ENCODE measurements at regions of chr14 and their contacts with region 1.

Region 1: DNA sequence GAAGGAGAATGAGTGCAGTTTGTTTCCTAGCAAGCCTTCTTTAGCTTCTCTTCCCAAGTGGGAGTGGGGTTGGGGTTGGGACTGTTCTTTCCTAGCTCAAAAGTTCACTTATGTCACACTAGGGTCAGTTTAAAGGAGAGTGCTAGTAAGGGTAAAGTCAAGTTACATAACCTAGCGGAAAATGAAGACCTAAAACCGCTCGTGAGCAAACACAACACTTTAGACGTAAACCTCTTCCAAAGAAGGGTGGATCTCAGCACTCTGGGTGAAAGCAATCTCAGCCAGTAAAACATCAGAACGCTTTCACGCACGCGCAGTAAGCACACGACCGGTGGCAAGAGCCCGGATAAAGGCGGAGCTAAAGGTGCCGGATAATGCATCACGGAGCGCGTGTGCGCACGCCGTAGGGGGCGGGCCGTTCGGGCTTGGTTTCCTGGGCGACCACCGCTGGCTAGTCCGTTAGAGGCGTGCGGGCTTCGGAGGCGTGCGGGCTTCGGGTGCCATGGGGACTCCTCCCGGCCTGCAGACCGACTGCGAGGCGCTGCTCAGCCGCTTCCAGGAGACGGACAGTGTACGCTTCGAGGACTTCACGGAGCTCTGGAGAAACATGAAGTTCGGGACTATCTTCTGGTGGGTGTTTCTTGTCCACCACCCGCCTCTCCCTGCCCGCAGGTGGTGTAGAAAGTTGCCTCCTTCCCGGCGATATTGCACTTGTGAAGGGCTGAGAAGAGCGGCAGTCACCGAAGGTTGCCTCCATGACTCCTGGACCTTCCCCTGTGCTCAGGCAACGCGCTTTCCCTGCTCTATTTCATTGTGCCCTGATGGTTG is at the start of gene SNAPC1:
- DNase-seq: peak; percentile 96
- ATAC-seq: peak; percentile 98
- H3K4me3 Mint-ChIP-seq: peak within 1 kb of the TSS; percentile 93
- H3K27ac Mint-ChIP-seq: peak within 1 kb of the TSS; percentile 98
- H3K4me1 Mint-ChIP-seq: peaks cover 38% of the 10 kb centered on the region
- H3K27me3 Mint-ChIP-seq: peaks cover 3% of the 10 kb centered on the region
- total RNA-seq, gene SNAPC1: 5.1 to 5.5 TPM

Region 2: GRCh38 chr14:61730756-61731373 is 31.3 kb before region 1 on chr14:
- POLR2A ChIA-PET with region 1: no interaction called
- DNase-seq: no peak
- ATAC-seq: no peak
- H3K4me3 Mint-ChIP-seq: no peak overlapping the region
- H3K27ac Mint-ChIP-seq: peak overlapping the region; percentile 24
- H3K4me1 Mint-ChIP-seq: peaks cover 44% of the 10 kb centered on the region
- H3K27me3 Mint-ChIP-seq: no peaks in the 10 kb centered on the region

Region 3: DNA sequence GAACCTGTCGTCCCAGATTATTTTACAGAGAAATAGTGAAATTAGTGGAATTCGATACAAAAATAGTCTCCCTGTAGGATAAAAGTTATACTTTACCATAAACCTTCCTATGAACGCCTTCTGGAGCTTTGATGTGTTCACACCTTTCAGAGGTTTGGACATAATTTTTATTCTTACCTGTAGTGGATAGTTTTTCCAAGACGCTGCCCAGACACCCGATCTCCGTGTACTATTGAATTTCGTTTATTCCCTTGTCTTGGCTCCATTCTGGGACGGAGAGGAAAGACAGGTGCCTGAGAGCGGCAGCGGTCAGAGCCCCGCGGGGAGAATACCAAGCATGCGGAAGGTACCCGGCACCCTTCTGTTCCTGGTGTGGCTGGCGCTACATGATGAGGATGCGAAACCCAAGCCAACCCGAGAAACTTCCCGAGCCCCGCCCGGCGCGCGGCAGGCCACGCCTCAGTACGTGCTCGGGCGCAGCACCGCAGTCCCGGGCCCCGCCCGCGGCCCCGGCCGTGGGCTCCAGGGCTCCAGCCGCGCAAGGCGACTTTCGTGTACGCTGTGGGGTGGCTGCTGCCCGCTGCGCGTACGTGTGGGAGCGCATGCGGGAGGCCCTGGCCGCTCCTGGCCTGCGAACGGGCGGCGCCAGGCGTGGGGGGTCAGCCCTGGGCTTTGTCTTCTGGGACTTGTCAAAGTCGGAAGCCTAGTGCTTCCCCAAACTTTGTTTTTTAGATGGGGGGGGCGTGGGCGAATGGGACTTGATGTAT is 11.3 kb before region 1 on chr14:
- POLR2A ChIA-PET with region 1: interaction called, 24 read pairs
- DNase-seq: peak; percentile 88
- ATAC-seq: peak; percentile 97
- H3K4me3 Mint-ChIP-seq: peak overlapping the region; percentile 99
- H3K27ac Mint-ChIP-seq: peak overlapping the region; percentile 91
- H3K4me1 Mint-ChIP-seq: peaks cover 44% of the 10 kb centered on the region
- H3K27me3 Mint-ChIP-seq: peaks cover 9% of the 10 kb centered on the region